CD4-positive, alpha-beta T cell (primary cell): ENCODE measurements at regions of chr20 and their contacts with region 1.

Region 1: GRCh38 chr20:3407771-3408637 is 535 bp upstream of the DNAAF9 start:
- DNase-seq: peak; percentile 51 to 89 (median 64)
- ATAC-seq: peak; percentile 64
- H3K4me3 ChIP-seq: peak overlapping the region; percentile 99
- H3K4me3 Mint-ChIP-seq: peak overlapping the region; percentile 99
- H3K27ac ChIP-seq: peak overlapping the region; percentile 65 to 73
- H3K27ac Mint-ChIP-seq: peak overlapping the region; percentile 92
- H3K4me1 ChIP-seq: peaks cover 24% of the 10 kb centered on the region
- H3K4me1 Mint-ChIP-seq: peaks cover 32% of the 10 kb centered on the region
- H3K27me3 ChIP-seq: peaks cover 0 to 1% of the 10 kb centered on the region in 2 experiments
- H3K27me3 Mint-ChIP-seq: no peaks in the 10 kb centered on the region
- CTCF ChIP-seq: no peak

Region 2: DNA sequence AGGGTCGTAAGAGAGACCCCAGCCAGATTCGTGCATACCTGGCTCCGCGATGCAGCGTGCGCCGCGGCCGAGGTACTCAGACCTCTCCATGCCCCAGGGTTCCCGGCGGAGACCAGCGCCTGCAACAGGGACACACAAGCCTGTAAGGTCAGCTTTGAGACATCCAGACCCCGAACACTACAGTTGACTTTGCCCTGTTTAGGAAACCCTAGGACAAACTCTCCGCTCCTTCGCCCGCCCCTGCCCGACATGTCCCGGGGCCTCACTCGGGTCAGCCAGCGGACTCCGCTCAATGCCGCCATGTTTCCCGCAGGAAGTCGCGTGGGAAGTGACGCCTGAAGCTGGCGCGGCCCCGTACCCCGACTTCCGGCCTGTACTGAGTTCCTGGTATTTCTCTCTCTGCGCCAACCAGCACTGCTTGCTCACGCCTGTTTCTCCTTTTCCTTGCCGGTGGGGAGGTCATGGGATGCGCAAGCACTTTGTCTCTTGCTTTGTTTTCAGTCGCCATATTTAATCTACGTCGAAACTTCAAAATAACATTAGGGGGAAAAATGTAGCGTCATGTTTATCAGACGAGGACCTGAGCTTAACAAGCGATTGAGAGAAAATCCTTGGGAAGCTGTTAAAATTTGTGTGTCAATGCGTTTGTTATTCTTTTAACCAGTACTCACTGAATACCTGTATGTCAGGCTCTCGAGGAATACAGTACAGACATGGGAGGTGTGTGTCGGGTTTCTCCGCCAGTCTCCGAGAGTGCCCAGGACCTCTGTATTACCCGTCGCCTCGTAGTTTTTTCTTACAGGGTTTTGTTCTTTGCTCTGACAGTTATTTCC is 743.9 kb before region 1 on chr20 and contains the start of gene IDH3B:
- CTCF ChIA-PET with region 1: no interaction called
- POLR2A ChIA-PET with region 1: interaction called, 5 read pairs
- intact Hi-C with region 1: loop called in 1 of 2 experiments (anchors 5 kb)
- DNase-seq: peak; percentile 83 to 96 (median 89)
- ATAC-seq: peak; percentile 99
- H3K4me3 ChIP-seq: peak within 1 kb of the TSS; percentile 90
- H3K4me3 Mint-ChIP-seq: peak within 1 kb of the TSS; percentile 94
- H3K27ac ChIP-seq: peak within 1 kb of the TSS; percentile 77 to 96
- H3K27ac Mint-ChIP-seq: peak within 1 kb of the TSS; percentile 91
- H3K4me1 ChIP-seq: peaks cover 18% of the 10 kb centered on the region
- H3K4me1 Mint-ChIP-seq: peaks cover 28% of the 10 kb centered on the region
- H3K27me3 ChIP-seq: no peaks in the 10 kb centered on the region
- H3K27me3 Mint-ChIP-seq: no peaks in the 10 kb centered on the region
- CTCF ChIP-seq: no peak
- total RNA-seq, gene IDH3B: 171 to 181 TPM

Region 3: DNA sequence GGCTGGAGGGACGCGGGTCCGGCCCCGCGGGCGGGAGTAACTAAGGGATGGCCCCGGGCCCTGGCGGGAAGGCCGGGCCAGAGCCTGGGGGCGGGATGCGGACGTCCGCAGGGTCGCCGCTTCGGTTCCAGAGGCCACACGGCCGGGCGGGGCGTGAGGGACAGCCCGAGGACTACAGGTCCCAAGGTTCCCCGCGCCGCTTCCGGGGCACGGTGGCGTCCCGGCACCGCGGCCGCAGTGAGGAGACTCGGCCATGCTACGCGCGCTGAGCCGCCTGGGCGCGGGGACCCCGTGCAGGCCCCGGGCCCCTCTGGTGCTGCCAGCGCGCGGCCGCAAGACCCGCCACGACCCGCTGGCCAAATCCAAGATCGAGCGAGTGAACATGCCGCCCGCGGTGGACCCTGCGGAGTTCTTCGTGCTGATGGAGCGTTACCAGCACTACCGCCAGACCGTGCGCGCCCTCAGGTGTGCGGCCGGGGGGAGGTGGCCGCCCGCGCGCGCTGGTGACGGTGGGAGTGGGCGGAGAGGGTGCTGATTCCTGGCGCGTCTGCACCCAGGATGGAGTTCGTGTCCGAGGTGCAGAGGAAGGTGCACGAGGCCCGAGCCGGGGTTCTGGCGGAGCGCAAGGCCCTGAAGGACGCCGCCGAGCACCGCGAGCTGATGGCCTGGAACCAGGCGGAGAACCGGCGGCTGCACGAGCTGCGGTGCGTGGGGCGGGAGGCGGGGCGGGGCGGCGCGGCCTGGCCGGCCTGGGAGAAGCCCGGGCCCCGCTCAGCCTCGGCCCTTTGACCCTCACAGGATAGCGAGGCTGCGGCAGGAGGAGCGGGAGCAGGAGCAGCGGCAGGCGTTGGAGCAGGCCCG is 362.0 kb before region 1 on chr20 and contains the start of gene MRPS26:
- CTCF ChIA-PET with region 1: no interaction called
- POLR2A ChIA-PET with region 1: no interaction called
- intact Hi-C with region 1: loop called in 1 of 2 experiments (anchors 5 kb)
- DNase-seq: peak; percentile 57 to 87 (median 76)
- ATAC-seq: peak; percentile 86
- H3K4me3 ChIP-seq: peak within 1 kb of the TSS; percentile 76
- H3K4me3 Mint-ChIP-seq: peak within 1 kb of the TSS; percentile 95
- H3K27ac ChIP-seq: peak within 1 kb of the TSS; percentile 48 to 49
- H3K27ac Mint-ChIP-seq: peak within 1 kb of the TSS; percentile 83
- H3K4me1 ChIP-seq: peaks cover 27% of the 10 kb centered on the region
- H3K4me1 Mint-ChIP-seq: peaks cover 21% of the 10 kb centered on the region
- H3K27me3 ChIP-seq: no peaks in the 10 kb centered on the region
- H3K27me3 Mint-ChIP-seq: no peaks in the 10 kb centered on the region
- CTCF ChIP-seq: no peak
- total RNA-seq, gene MRPS26: 19.3 to 22.7 TPM

Region 4: GRCh38 chr20:3209257-3209945 is 198.6 kb before region 1 on chr20 and contains the start of gene ITPA:
- CTCF ChIA-PET with region 1: no interaction called
- POLR2A ChIA-PET with region 1: no interaction called
- intact Hi-C with region 1: loop called in 1 of 2 experiments (anchors 5 kb)
- DNase-seq: peak; percentile 27 to 74 (median 50)
- ATAC-seq: peak; percentile 25
- H3K4me3 ChIP-seq: peak within 1 kb of the TSS; percentile 99
- H3K4me3 Mint-ChIP-seq: peak within 1 kb of the TSS; percentile 96
- H3K27ac ChIP-seq: peak within 1 kb of the TSS; percentile 73 to 89
- H3K27ac Mint-ChIP-seq: peak within 1 kb of the TSS; percentile 83
- H3K4me1 ChIP-seq: peaks cover 32% of the 10 kb centered on the region
- H3K4me1 Mint-ChIP-seq: peaks cover 30% of the 10 kb centered on the region
- H3K27me3 ChIP-seq: no peaks in the 10 kb centered on the region
- H3K27me3 Mint-ChIP-seq: no peaks in the 10 kb centered on the region
- CTCF ChIP-seq: no peak
- total RNA-seq, gene ITPA: 17.8 to 19.5 TPM

Region 5: GRCh38 chr20:3390759-3391500 is 17.1 kb before region 1 on chr20:
- CTCF ChIA-PET with region 1: no interaction called
- POLR2A ChIA-PET with region 1: no interaction called
- intact Hi-C with region 1: no loop called
- DNase-seq: no peak
- ATAC-seq: no peak
- H3K4me3 ChIP-seq: no peak overlapping the region
- H3K4me3 Mint-ChIP-seq: no peak overlapping the region
- H3K27ac ChIP-seq: no peak overlapping the region
- H3K27ac Mint-ChIP-seq: no peak overlapping the region
- H3K4me1 ChIP-seq: no peaks in the 10 kb centered on the region
- H3K4me1 Mint-ChIP-seq: peaks cover 15% of the 10 kb centered on the region
- H3K27me3 ChIP-seq: no peaks in the 10 kb centered on the region
- H3K27me3 Mint-ChIP-seq: no peaks in the 10 kb centered on the region
- CTCF ChIP-seq: no peak

Region 6: DNA sequence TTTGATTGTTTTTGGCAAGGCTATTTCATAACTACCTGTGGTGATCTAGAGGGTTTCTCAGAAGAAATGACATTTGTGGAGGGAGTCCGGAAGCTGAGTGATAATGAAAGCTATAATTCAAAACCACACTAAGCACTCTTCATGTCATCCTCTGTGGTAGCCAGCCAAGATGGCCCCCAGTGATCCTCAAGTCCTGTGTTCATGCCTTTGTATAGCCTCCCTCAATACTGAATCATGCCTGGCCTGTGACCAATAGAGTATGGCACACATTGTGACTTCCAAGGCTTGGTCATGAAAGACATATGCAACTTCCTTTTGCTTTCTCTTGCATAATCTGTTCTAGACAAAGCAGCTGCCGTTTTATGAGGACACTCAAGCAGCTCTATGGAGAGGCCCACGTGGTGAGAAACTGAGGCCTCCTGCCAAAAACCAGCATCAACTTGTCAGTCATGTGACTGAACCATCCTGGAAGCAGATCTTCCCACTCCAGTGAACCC is 12.3 kb after region 1 on chr20:
- CTCF ChIA-PET with region 1: no interaction called
- POLR2A ChIA-PET with region 1: interaction called, 20 read pairs
- intact Hi-C with region 1: no loop called
- DNase-seq: peak in 6 of 14 experiments; percentile 2 to 75 (median 42)
- ATAC-seq: peak; percentile 86
- H3K4me3 ChIP-seq: no peak overlapping the region
- H3K4me3 Mint-ChIP-seq: no peak overlapping the region
- H3K27ac ChIP-seq: no peak overlapping the region
- H3K27ac Mint-ChIP-seq: no peak overlapping the region
- H3K4me1 ChIP-seq: peaks cover 12% of the 10 kb centered on the region
- H3K4me1 Mint-ChIP-seq: peaks cover 8% of the 10 kb centered on the region
- H3K27me3 ChIP-seq: peaks cover 0 to 4% of the 10 kb centered on the region in 2 experiments
- H3K27me3 Mint-ChIP-seq: no peaks in the 10 kb centered on the region
- CTCF ChIP-seq: no peak

Region 7: GRCh38 chr20:3470627-3471396 is 62.8 kb after region 1 on chr20 and contains the start of gene ATRN:
- CTCF ChIA-PET with region 1: no interaction called
- POLR2A ChIA-PET with region 1: interaction called, 8 read pairs
- intact Hi-C with region 1: loop called in 1 of 2 experiments (anchors 1 kb)
- DNase-seq: peak; percentile 65 to 92 (median 84)
- ATAC-seq: peak; percentile 86
- H3K4me3 ChIP-seq: peak within 1 kb of the TSS; percentile 92
- H3K4me3 Mint-ChIP-seq: peak within 1 kb of the TSS; percentile 92
- H3K27ac ChIP-seq: peak within 1 kb of the TSS; percentile 9 to 68
- H3K27ac Mint-ChIP-seq: peak within 1 kb of the TSS; percentile 76
- H3K4me1 ChIP-seq: peaks cover 31% of the 10 kb centered on the region
- H3K4me1 Mint-ChIP-seq: peaks cover 34% of the 10 kb centered on the region
- H3K27me3 ChIP-seq: no peaks in the 10 kb centered on the region
- H3K27me3 Mint-ChIP-seq: no peaks in the 10 kb centered on the region
- CTCF ChIP-seq: no peak
- total RNA-seq, gene ATRN: 8.8 to 9.1 TPM